Activated CD4-positive, alpha-beta memory T cell treated with anti-CD3 and anti-CD28 coated beads for 36 hours (primary cell): ENCODE measurements at regions of chr10 and their contacts with region 1.

Region 1: GRCh38 chr10:121927841-121928527 is at the start of gene ATE1:
- DNase-seq: peak; percentile 87
- H3K4me3 Mint-ChIP-seq: peak within 1 kb of the TSS; percentile 94
- H3K27ac Mint-ChIP-seq: peak within 1 kb of the TSS; percentile 95
- H3K4me1 Mint-ChIP-seq: peaks cover 27% of the 10 kb centered on the region
- H3K27me3 Mint-ChIP-seq: no peaks in the 10 kb centered on the region
- total RNA-seq, gene ATE1: 19.4 to 23.1 TPM

Region 2: DNA sequence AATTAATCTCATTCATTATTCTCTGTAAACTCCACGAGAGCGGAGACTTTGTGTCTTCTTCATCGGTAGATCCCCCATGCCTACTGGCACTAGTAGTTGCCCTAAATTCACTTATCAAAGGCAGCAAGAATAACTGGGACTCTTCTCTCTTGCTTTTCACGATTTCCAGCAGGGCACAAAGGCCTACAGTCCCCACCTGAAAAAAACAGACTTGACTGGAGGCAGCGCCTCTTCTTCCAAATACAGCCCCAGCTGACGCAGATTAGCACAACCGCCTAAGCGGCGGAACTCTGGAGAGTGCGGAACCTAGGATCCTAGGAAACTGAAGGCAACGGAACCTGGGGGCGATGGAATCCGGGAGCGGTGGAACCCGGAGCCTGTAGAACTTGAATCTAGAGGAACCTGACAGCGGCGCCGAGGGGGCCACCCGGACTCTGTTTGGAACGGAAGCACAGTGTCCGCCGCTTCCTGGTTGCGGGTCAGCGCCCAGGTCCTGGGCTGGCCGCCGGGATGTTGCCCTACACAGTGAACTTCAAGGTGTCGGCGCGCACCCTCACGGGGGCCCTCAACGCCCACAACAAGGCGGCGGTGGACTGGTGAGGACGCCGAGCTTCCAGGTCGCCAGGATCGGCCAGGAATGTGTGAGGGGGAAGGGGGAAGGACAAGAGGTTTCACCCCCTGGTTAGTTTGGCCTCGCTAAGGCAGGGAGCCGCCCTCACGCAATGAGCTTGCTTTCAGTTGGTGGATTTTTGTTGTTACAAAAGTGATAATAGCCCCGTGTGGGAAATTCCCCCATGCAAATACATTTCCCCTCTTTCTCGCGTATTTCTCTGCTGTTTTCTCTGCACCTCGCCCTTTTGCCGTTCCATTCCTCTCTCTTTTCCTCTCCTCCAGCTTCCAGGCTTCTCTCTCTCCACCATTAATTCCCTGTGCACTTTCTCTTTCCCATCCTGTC is 1076.8 kb before region 1 on chr10 and contains the start of gene WDR11:
- CTCF ChIA-PET with region 1: no interaction called
- POLR2A ChIA-PET with region 1: no interaction called
- intact Hi-C with region 1: loop called (anchors 2 kb)
- DNase-seq: peak; percentile 82
- H3K4me3 Mint-ChIP-seq: peak within 1 kb of the TSS; percentile 96
- H3K27ac Mint-ChIP-seq: peak within 1 kb of the TSS; percentile 82
- H3K4me1 Mint-ChIP-seq: peaks cover 43% of the 10 kb centered on the region
- H3K27me3 Mint-ChIP-seq: peaks cover 2% of the 10 kb centered on the region
- total RNA-seq, gene WDR11: 37.3 to 39.6 TPM

Region 3: DNA sequence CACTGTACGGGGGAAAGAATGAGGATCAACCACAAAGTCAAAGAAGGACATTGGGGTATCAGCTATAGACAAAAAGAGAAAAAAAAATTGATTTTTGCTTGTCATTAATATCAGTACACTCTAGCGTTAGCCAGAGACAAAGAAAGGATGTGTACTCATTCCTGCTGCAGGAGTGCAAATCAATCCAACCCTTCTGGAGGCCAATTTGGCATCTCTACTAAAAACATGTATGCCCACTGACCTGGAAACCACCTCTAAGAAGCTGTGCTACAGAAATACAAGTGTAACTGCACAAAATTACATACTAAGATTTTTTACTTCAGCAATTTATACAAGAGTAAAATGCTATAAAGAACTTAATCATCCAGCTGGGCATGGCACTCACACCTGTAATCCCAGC is 33.5 kb after region 1 on chr10:
- CTCF ChIA-PET with region 1: no interaction called
- POLR2A ChIA-PET with region 1: no interaction called
- intact Hi-C with region 1: no loop called
- DNase-seq: no peak
- H3K4me3 Mint-ChIP-seq: no peak overlapping the region
- H3K27ac Mint-ChIP-seq: no peak overlapping the region
- H3K4me1 Mint-ChIP-seq: peaks cover 11% of the 10 kb centered on the region
- H3K27me3 Mint-ChIP-seq: no peaks in the 10 kb centered on the region

Region 4: GRCh38 chr10:121974535-121975294 is 46.7 kb after region 1 on chr10 and contains the start of gene NSMCE4A:
- CTCF ChIA-PET with region 1: interaction called, 3 read pairs
- POLR2A ChIA-PET with region 1: interaction called, 9 read pairs
- intact Hi-C with region 1: loop called (anchors 1 kb)
- DNase-seq: peak; percentile 78
- H3K4me3 Mint-ChIP-seq: peak within 1 kb of the TSS; percentile 75
- H3K27ac Mint-ChIP-seq: peak within 1 kb of the TSS; percentile 67
- H3K4me1 Mint-ChIP-seq: peaks cover 20% of the 10 kb centered on the region
- H3K27me3 Mint-ChIP-seq: no peaks in the 10 kb centered on the region
- total RNA-seq, gene NSMCE4A: 50.8 to 53.9 TPM